Activated T-helper 1 cell treated with anti-CD3 and anti-CD28 coated beads, Interleukin-12 subunit alpha, Interleukin-12 subunit beta, Interleukin-2, Interleukin-4 antibody, amounts not matched to agents 30 ng/mL and 10 ng/mL and 1 ng/mL, durations not matched to agents 14 hours and 24 hours and 36 hours (primary cell): ENCODE measurements at regions of chr14 and their contacts with region 1.

Region 1: DNA sequence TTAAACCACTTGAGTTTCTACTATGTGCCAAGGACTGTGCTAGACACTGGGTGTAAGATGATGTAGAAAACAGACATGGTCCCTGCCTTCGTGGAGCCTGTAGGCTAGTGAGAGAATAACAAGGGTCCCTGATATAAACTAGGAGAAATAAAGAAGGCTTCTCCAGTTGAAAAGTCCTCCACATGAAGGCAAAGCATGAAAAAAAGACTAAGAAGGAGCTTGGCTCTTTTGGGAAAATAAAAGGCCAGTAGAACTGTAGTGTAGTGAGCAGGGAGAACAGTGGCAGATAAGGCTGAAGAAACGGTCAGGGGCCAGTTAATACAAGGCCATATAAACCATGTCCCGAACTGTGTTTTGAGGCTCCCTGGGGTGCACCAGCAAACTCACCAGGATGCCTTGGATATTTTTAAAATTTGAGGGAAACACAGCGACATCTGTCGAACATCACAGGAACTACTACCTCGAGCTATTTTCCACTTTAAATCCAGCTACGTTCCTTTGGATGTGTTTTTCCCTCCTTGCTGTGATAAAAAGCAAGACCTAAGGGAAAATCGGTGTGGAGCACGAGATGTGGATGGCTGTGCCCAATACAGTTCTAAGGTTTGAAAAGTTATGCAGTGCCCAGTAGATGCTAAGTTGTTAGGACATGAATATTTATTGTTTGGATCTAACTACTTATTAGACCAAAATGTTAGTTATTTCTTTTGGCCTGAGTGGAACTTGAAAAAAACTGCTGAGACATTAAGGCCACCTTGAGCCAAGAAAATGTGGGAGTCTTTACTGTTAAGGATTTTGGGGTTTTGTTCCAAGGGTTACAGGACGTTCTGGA is 8.5 kb upstream of the CFL2 start:
- DNase-seq: peak; percentile 10
- H3K4me3 Mint-ChIP-seq: no peak overlapping the region
- H3K27ac Mint-ChIP-seq: no peak overlapping the region
- H3K4me1 Mint-ChIP-seq: peaks cover 10% of the 10 kb centered on the region
- H3K27me3 Mint-ChIP-seq: peaks cover 28% of the 10 kb centered on the region

Region 2: GRCh38 chr14:34211732-34212131 is 511.2 kb before region 1 on chr14:
- intact Hi-C with region 1: no loop called
- DNase-seq: no peak
- H3K4me3 Mint-ChIP-seq: peak overlapping the region; percentile 22
- H3K27ac Mint-ChIP-seq: peak overlapping the region; percentile 47
- H3K4me1 Mint-ChIP-seq: peaks cover 22% of the 10 kb centered on the region
- H3K27me3 Mint-ChIP-seq: peaks cover 5% of the 10 kb centered on the region

Region 3: GRCh38 chr14:34671716-34672115 is 51.2 kb before region 1 on chr14:
- intact Hi-C with region 1: loop called (anchors 1 kb)
- DNase-seq: no peak
- H3K4me3 Mint-ChIP-seq: no peak overlapping the region
- H3K27ac Mint-ChIP-seq: no peak overlapping the region
- H3K4me1 Mint-ChIP-seq: no peaks in the 10 kb centered on the region
- H3K27me3 Mint-ChIP-seq: peaks cover 3% of the 10 kb centered on the region

Region 4: GRCh38 chr14:34693228-34693939 is 29.5 kb before region 1 on chr14:
- intact Hi-C with region 1: no loop called
- DNase-seq: no peak
- H3K4me3 Mint-ChIP-seq: peak overlapping the region; percentile 66
- H3K27ac Mint-ChIP-seq: no peak overlapping the region
- H3K4me1 Mint-ChIP-seq: peaks cover 10% of the 10 kb centered on the region
- H3K27me3 Mint-ChIP-seq: peaks cover 7% of the 10 kb centered on the region